ENCODE measurements at regions of chr5 and their contacts with region 1.

Region 1: GRCh38 chr5:172958331-172959046 is 735 bp upstream of the RPL26L1 start:
- DNase-seq: peak; percentile 64
- H3K4me3 Mint-ChIP-seq: peak overlapping the region; percentile 85
- H3K27ac Mint-ChIP-seq: peak overlapping the region; percentile 96
- H3K4me1 Mint-ChIP-seq: peaks cover 35% of the 10 kb centered on the region
- H3K27me3 Mint-ChIP-seq: peaks cover 4% of the 10 kb centered on the region

Region 2: GRCh38 chr5:172932313-172933017 is 26.0 kb before region 1 on chr5:
- CTCF ChIA-PET with region 1: interaction called, 10 read pairs
- POLR2A ChIA-PET with region 1: interaction called, 3 read pairs
- DNase-seq: peak; percentile 73
- H3K4me3 Mint-ChIP-seq: no peak overlapping the region
- H3K27ac Mint-ChIP-seq: no peak overlapping the region
- H3K4me1 Mint-ChIP-seq: peaks cover 2% of the 10 kb centered on the region
- H3K27me3 Mint-ChIP-seq: no peaks in the 10 kb centered on the region

Region 3: GRCh38 chr5:172973127-172973916 is 14.8 kb after region 1 on chr5:
- CTCF ChIA-PET with region 1: interaction called, 15 read pairs
- POLR2A ChIA-PET with region 1: no interaction called
- DNase-seq: no peak
- H3K4me3 Mint-ChIP-seq: no peak overlapping the region
- H3K27ac Mint-ChIP-seq: no peak overlapping the region
- H3K4me1 Mint-ChIP-seq: no peaks in the 10 kb centered on the region
- H3K27me3 Mint-ChIP-seq: peaks cover 2% of the 10 kb centered on the region